ENCODE measurements at regions of chr15 and their contacts with region 1.

Region 1: DNA sequence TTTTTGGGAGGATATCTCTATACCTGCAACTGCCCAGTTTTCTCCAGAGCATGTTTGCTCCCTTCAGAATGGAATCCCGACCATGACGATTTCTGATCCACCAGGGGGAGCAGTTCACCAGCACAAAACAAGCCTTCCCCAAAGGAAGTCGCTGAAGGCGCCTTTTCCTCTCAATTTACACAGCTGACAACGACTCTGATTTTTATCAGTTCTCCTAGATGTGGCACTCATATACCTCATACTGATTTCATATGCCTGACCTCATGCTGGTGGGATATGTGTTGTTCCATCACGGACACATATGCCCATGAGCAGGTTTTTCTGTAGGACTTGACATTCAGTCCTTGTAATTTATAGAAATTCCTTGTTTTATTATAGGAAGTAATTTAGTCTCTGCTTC is 1028.2 kb downstream of the MCTP2 start:
- DNase-seq: peak; percentile 58
- H3K4me3 ChIP-seq: no peak overlapping the region
- H3K27ac ChIP-seq: no peak overlapping the region
- H3K4me1 ChIP-seq: peaks cover 18% of the 10 kb centered on the region
- H3K27me3 ChIP-seq: no peaks in the 10 kb centered on the region
- CTCF ChIP-seq: peak; percentile 67 to 81

Region 2: DNA sequence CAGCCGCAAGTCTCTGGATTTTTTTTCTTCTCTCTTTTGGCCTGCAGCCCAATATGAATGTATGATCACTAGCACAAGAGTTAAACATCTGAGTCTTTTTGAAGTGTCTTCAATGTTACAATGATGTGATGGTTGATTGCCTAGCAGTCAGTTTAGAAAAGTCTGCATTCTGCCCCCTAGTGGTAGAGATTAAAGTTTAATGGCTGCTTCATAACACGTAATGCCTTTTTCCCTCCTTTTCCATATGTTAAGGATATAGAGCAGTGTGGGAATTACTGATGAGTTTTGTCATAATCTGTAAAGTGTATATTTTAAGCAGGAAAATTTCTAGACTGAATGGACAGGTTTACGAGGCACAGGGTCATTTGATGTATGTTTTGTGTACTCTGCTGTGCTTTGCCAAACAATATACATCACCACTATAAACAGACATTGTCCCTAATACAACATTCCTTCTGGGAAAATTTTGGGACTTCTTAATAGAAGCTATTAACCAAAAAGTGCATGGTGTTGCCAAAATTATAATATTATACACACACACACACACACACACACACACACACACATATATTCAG is 32.5 kb after region 1 on chr15:
- CTCF ChIA-PET with region 1: no interaction called
- dilution Hi-C with region 1: no loop called
- in situ Hi-C with region 1: no loop called
- intact Hi-C with region 1: loop called (anchors 1 kb)
- DNase-seq: peak; percentile 27
- H3K4me3 ChIP-seq: no peak overlapping the region
- H3K27ac ChIP-seq: no peak overlapping the region
- H3K4me1 ChIP-seq: peaks cover 5% of the 10 kb centered on the region
- H3K27me3 ChIP-seq: no peaks in the 10 kb centered on the region
- CTCF ChIP-seq: peak; percentile 65

Region 3: GRCh38 chr15:96336642-96337364 is 1077.3 kb after region 1 on chr15:
- CTCF ChIA-PET with region 1: interaction called, 31 read pairs
- dilution Hi-C with region 1: no loop called
- in situ Hi-C with region 1: loop called (anchors 10 kb)
- intact Hi-C with region 1: no loop called
- DNase-seq: no peak
- H3K4me3 ChIP-seq: no peak overlapping the region
- H3K27ac ChIP-seq: no peak overlapping the region
- H3K4me1 ChIP-seq: peaks cover 51% of the 10 kb centered on the region
- H3K27me3 ChIP-seq: no peaks in the 10 kb centered on the region
- CTCF ChIP-seq: no peak

Region 4: DNA sequence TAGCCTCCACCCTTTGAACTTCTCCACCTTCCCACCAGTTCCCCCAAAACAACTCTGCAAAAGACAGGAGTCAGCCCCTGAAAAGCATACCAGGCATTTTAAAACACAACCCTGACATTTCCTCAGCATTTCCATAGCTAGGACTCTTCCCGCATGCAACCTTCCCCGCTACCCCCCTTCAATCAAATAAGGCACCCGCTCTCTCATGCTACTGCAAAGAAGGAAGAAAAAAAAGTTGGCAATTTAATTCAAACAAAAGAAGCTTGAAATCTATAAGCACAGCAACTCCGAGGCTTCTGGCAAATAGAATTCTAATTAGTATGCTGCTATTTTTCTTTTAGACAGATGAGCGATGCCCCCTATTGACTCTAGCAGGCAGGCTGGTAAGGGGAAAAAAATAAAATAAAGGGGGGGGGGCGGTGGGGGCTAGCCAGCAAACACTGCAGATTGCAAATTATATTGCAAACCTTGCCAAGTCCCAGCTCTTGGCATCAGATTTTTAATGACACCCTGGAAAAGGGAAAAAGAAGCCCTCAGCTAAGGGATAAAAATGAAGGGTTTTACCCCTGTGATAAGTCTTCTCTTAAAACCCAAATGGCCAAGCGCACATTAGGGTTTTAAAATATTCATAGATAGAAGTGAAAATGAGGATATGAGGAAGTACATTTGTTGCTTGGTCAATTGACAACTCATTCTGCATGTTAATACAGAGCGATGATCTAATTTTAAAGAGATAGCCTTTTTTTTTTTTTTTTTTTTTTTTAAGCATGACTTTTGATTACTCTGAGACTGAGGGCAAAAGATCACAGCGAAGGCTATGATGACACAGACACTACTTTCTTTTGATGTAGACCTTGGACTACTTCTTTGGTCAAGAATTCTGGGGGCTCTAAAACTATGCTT is 1326.2 kb after region 1 on chr15:
- CTCF ChIA-PET with region 1: no interaction called
- dilution Hi-C with region 1: no loop called
- in situ Hi-C with region 1: no loop called
- intact Hi-C with region 1: loop called (anchors 2 kb)
- DNase-seq: no peak
- H3K4me3 ChIP-seq: no peak overlapping the region
- H3K27ac ChIP-seq: no peak overlapping the region
- H3K4me1 ChIP-seq: no peaks in the 10 kb centered on the region
- H3K27me3 ChIP-seq: peaks cover 4% of the 10 kb centered on the region
- CTCF ChIP-seq: peak; percentile 12 to 39

Measured in mammary epithelial cell (primary cell).